ENCODE measurements at regions of chr10 and their contacts with region 1.

Region 1: DNA sequence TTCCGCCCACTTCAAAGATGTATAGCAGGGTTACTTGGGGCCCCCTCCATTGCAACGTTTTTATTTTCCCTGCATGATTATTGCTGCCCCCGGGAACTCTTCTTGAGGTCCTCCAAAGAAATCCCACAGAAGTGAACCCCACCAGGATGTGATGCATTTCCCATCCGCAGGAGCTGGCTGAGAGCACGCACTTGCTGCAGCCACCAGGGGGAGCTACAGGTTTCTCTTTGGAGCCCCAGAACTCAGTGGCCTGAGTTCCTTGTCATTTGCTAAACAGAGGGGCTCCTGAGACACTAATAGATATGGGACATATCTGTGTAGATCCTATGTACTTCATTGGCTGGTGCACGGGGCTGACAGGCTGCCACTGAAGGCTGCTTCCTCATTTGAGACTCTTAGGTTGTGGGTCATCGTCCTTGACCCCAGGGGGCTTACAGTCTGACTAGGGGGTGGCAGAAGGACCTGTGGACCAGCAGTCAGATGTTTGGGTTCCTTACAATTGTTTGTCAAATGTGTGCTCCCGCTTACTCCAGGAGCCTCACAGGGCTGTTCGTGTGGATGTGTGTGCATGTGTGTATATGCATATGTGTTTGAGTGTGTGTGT is 52.3 kb upstream of the ENO4 start:
- DNase-seq: peak; percentile 72 to 76 (median 76)
- ATAC-seq: peak; percentile 88 to 97 (median 92)
- H3K4me3 ChIP-seq: no peak overlapping the region
- H3K27ac ChIP-seq: no peak overlapping the region
- H3K4me1 ChIP-seq: no peaks in the 10 kb centered on the region
- H3K27me3 ChIP-seq: no peaks in the 10 kb centered on the region
- CTCF ChIP-seq: peak; percentile 89 to 94 (median 92)
- POLR2A ChIP-seq: no peak

Region 2: GRCh38 chr10:117167789-117168674 is 371.0 kb after region 1 on chr10:
- intact Hi-C with region 1: loop called (anchors 5 kb)
- DNase-seq: peak; percentile 62 to 73 (median 73)
- ATAC-seq: peak; percentile 88 to 91 (median 90)
- H3K4me3 ChIP-seq: peak overlapping the region in 1 of 3 donors; percentile 15
- H3K27ac ChIP-seq: no peak overlapping the region
- H3K4me1 ChIP-seq: peaks cover 0 to 20% (median 0%) of the 10 kb centered on the region in 4 donors
- H3K27me3 ChIP-seq: peaks cover 15 to 75% of the 10 kb centered on the region in 2 donors
- CTCF ChIP-seq: peak; percentile 86 to 98 (median 94)
- POLR2A ChIP-seq: no peak

Region 3: GRCh38 chr10:117174439-117175214 is 377.6 kb after region 1 on chr10:
- intact Hi-C with region 1: loop called (anchors 5 kb)
- DNase-seq: peak; percentile 78 to 83 (median 80)
- ATAC-seq: peak; percentile 93 to 96 (median 94)
- H3K4me3 ChIP-seq: peak overlapping the region; percentile 41 to 50 (median 42)
- H3K27ac ChIP-seq: no peak overlapping the region
- H3K4me1 ChIP-seq: peaks cover 0 to 15% (median 0%) of the 10 kb centered on the region in 4 donors
- H3K27me3 ChIP-seq: peaks cover 0 to 26% of the 10 kb centered on the region in 2 donors
- CTCF ChIP-seq: peak; percentile 75 to 90 (median 81)
- POLR2A ChIP-seq: no peak

Measured in right lobe of liver (tissue), 6 donors.